AG04449 (cell line): ENCODE measurements at regions of chr1 and their contacts with region 1.

Region 1: GRCh38 chr1:87953732-87954344 is 625.2 kb downstream of the LMO4 start:
- DNase-seq: no peak
- H3K4me3 ChIP-seq: no peak overlapping the region
- CTCF ChIP-seq: peak; percentile 62

Region 2: DNA sequence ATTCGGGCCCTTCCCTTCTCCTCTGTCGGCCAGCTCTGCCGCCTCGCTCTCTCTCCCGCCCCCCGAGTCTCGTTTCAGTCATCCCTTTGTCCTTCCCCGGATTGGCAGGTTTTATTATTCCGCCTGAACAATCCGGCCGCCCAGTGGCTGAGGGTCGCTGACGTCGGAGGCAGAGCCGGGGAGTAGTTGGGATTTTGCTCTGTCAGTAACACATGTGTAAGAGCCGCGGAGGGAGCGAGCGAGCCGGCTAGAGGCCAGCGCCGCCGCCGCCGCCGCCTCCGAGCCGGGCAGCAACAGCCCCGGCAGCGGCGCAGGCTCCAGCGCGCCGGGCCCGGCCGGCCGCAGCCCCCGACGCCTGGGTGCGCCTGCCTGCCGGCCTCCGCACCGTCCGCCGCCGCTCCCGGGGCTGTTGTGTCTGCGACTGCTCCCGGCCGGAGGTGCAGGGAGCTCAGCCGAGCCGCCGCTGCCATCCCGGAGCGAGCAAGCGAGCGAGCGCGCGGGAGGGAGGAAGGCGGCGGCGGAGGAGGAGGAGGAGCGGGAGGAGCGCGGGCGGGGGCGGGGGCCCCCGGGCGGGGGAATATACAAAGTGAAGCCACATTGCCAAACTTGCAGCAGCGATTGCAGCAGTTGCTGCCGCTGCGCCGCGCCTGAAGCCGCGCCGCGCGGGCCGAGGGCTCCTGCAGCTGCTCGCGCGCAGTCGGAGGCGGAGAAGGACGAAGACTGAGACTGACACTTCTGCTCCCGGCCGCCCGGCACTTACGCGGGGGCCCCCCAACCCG is 625.4 kb before region 1 on chr1 and contains the start of gene LMO4:
- CTCF ChIA-PET with region 1: interaction called, 15 read pairs
- POLR2A ChIA-PET with region 1: interaction called, 3 read pairs
- DNase-seq: peak; percentile 89
- H3K4me3 ChIP-seq: peak within 1 kb of the TSS; percentile 71
- CTCF ChIP-seq: no peak

Region 3: DNA sequence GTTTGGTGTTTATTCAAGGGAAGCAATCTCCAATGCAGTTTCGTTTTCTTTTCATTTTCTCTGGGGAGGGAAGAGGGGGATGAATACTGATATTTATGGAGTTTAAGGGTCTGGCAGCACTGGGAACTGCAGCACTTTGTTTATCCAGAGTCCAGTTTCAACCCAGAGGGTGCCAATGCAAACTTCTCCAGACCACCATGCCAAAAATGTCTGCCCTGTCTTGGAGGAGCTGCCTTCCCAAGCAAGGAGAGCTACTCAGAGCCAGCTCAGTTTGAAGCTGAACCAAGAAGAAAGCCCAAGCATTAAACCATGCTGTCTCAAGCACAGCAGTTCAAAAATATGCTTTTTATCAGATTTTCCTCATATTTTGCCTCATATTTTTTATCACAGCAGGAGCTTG is 35.4 kb before region 1 on chr1:
- CTCF ChIA-PET with region 1: interaction called, 10 read pairs
- POLR2A ChIA-PET with region 1: no interaction called
- DNase-seq: no peak
- H3K4me3 ChIP-seq: no peak overlapping the region
- CTCF ChIP-seq: no peak

Region 4: GRCh38 chr1:87927391-87928280 is 26.2 kb before region 1 on chr1:
- CTCF ChIA-PET with region 1: interaction called, 24 read pairs
- POLR2A ChIA-PET with region 1: interaction called, 3 read pairs
- DNase-seq: no peak
- H3K4me3 ChIP-seq: no peak overlapping the region
- CTCF ChIP-seq: no peak

Region 5: GRCh38 chr1:87942165-87942564 is 11.7 kb before region 1 on chr1:
- CTCF ChIA-PET with region 1: interaction called, 44 read pairs
- POLR2A ChIA-PET with region 1: no interaction called
- DNase-seq: peak; percentile 47
- H3K4me3 ChIP-seq: no peak overlapping the region
- CTCF ChIP-seq: no peak

Region 6: GRCh38 chr1:88549536-88549935 is 595.7 kb after region 1 on chr1:
- CTCF ChIA-PET with region 1: no interaction called
- POLR2A ChIA-PET with region 1: no interaction called
- DNase-seq: no peak
- H3K4me3 ChIP-seq: no peak overlapping the region
- CTCF ChIP-seq: no peak